Transverse colon (tissue), 4 donors: ENCODE measurements at regions of chr13 and their contacts with region 1.

Region 1: DNA sequence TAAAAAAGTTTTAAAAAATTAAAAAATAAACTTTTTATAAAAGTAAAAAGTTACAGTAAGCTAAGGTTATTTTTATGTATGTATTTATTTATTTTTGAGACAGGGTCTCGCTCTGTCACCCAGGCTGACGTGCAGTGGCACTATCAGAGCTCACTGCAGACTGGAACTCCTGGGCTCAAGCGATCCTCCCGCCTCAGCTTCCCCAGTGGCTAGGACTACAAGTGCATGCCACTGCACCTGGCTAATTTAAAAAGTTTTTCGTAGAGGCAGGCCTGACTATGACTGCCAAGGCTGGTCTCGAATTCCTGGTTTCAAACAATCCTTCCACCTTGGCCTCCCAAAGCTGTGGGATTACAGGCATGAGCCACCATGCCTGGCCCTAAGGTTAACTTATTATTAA is 64.1 kb downstream of the CDADC1 start:
- DNase-seq: no peak
- H3K4me3 ChIP-seq: no peak overlapping the region
- H3K27ac ChIP-seq: no peak overlapping the region
- H3K4me1 ChIP-seq: peaks cover 8 to 41% (median 17%) of the 10 kb centered on the region in 4 donors
- H3K27me3 ChIP-seq: no peaks in the 10 kb centered on the region
- CTCF ChIP-seq: no peak
- EP300 ChIP-seq: no peak
- POLR2A ChIP-seq: no peak

Region 2: DNA sequence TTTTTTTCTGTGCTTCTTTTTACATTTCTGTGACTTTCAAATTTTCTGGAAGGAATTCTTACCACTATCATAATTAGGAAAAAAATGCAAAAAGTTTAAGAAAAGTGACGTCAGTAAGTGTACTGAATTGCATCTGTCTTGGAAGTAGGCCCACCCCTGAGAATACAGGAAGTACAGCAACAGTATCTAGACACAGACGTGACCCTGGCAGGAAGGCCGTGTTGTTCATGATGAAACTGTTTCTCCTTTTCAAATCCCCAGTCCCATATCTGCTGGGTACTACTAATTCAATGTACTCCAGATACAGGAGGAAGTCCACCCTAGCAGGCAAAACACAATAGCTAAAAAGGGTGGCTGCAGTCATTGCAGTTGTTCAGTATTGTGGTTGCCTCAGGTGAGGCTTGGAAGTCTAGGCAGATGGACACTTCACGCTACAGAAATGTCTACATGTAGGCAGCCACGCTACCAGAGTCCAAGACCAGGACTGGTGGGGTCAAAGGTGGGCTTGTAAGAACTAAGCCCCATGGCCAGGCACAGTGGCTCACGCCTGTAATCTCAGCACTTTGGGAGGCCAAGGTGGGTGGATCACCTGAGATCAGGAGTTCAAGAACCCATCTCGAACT is 1167.3 kb before region 1 on chr13:
- in situ Hi-C with region 1: no loop called
- intact Hi-C with region 1: no loop called
- DNase-seq: peak; percentile 14
- H3K4me3 ChIP-seq: no peak overlapping the region
- H3K27ac ChIP-seq: peak overlapping the region; percentile 29 to 69 (median 48)
- H3K4me1 ChIP-seq: peaks cover 0 to 10% (median 0%) of the 10 kb centered on the region in 4 donors
- H3K27me3 ChIP-seq: no peaks in the 10 kb centered on the region
- CTCF ChIP-seq: no peak
- EP300 ChIP-seq: no peak
- POLR2A ChIP-seq: no peak

Region 3: DNA sequence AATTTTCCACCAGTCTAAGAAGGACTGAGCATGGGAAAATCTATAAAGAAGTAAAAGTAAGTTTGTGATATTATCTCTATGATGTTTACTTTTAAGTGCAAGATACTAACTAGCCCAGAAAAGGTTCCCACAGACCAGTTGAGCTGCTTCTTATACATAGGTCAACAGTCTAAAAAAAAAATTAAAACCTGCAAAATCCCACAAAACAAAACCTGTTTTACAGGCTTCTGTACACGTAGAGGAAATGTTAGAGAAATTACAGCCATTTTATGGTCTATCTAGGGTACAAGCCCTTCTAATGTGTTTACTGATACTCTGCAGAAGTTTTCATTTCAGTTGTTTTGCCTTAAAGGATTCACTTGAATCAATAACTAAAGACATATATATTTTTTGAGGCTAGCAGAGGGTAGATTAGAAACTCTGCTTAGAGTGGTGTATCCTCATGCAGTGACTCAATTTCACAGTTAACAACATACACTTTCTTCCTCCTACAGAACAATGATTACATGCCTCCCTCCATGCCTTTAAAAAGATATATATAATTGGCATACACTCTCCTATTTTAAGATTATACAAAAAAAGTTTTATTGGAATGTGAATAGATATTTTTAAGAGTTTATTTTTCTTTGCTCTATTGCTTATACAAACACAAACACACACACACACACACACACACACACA is 88.1 kb after region 1 on chr13:
- in situ Hi-C with region 1: no loop called
- intact Hi-C with region 1: loop called (anchors 2 kb)
- DNase-seq: no peak
- H3K4me3 ChIP-seq: peak overlapping the region; percentile 18 to 44 (median 24)
- H3K27ac ChIP-seq: peak overlapping the region; percentile 81 to 92 (median 88)
- H3K4me1 ChIP-seq: peaks cover 4 to 20% (median 10%) of the 10 kb centered on the region in 4 donors
- H3K27me3 ChIP-seq: no peaks in the 10 kb centered on the region
- CTCF ChIP-seq: no peak
- EP300 ChIP-seq: no peak
- POLR2A ChIP-seq: no peak

Region 4: GRCh38 chr13:51134763-51135365 is 1823.0 kb after region 1 on chr13:
- in situ Hi-C with region 1: no loop called
- intact Hi-C with region 1: no loop called
- DNase-seq: no peak
- H3K4me3 ChIP-seq: no peak overlapping the region
- H3K27ac ChIP-seq: no peak overlapping the region
- H3K4me1 ChIP-seq: no peaks in the 10 kb centered on the region
- H3K27me3 ChIP-seq: no peaks in the 10 kb centered on the region
- CTCF ChIP-seq: no peak
- EP300 ChIP-seq: no peak
- POLR2A ChIP-seq: no peak